ENCODE measurements at regions of chr2 and their contacts with region 1.

Region 1: DNA sequence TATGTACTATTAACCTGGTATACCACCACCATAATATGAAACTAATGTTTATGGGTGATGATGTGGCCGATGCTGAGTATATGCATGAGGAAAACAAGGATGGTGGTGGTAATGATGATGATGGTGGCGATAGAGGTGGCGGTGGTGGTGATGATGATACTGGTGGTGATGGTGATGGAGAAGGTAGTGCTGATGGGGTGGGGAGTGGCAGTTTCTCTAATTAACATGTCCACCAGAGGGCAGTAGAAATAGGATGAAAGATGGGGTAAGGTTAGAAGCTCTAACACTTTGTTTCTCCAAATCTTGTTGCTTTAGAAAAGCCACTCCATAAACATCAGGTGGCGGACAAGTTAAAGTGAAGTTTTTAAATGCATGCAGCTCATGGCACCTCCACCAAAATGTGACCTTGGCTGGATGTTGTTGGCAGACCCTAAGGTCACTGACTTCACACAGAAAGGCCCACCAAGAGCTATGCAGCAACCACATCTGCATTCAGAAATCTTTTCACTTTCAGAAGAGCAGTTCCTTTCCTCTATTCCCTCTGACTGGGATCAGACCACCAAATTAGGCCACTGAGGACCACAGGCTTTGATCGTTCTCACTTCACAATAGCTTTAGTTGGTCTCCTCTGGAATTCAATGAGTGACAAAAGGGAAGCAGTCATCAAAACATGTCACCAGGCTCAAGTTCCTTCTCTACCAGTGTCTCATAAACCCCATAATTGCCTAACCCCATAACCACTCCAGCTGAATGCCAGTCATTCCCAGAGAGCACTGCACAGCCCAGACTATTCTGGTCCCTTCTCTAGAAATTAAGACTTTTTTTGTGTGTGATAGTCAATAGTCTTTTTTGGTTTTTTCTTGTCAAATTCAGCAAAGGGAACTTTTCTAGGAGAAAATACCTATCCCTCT is 7.5 kb upstream of the BCL11A start:
- DNase-seq: no peak
- ATAC-seq: peak; percentile 65
- H3K4me3 ChIP-seq: no peak overlapping the region
- H3K27ac ChIP-seq: no peak overlapping the region
- H3K4me1 ChIP-seq: no peaks in the 10 kb centered on the region
- H3K27me3 ChIP-seq: peaks cover 22% of the 10 kb centered on the region
- CTCF ChIP-seq: peak; percentile 56
- POLR2A ChIP-seq: no peak
- RAD21 ChIP-seq: peak; percentile 41

Region 2: DNA sequence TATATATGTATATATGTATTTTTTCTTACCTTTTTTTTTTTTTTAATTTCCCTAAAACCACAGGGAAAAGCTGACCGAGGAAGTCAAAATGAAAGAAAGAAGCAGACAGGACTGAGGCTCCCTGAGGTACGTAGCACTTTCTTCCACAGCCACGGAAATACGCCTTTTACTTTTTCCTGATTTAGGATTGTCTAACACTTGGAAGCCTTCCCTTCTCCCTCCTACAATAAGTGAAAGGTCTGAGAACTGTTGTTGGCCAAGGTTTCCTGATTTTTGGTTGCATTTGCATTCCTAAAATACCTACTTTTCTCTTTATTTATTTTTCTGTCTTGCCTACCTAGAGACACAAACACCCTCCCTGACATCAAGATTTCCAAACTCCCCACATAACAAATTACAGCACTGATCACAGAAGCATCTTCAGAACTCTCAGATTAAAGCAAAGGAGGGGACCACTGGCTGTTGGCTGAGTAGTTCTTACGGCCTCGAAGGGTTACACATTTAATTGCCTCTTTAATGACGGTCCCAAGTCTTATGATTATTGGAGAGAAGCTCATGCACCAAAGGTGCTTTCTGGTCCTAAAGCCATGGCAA is 1541.3 kb before region 1 on chr2:
- CTCF ChIA-PET with region 1: no interaction called
- POLR2A ChIA-PET with region 1: no interaction called
- dilution Hi-C with region 1: no loop called
- in situ Hi-C with region 1: loop called (anchors 10 kb)
- intact Hi-C with region 1: loop called (anchors 5 kb)
- DNase-seq: no peak
- ATAC-seq: no peak
- H3K4me3 ChIP-seq: no peak overlapping the region
- H3K27ac ChIP-seq: no peak overlapping the region
- H3K4me1 ChIP-seq: no peaks in the 10 kb centered on the region
- H3K27me3 ChIP-seq: no peaks in the 10 kb centered on the region
- CTCF ChIP-seq: no peak
- POLR2A ChIP-seq: no peak
- RAD21 ChIP-seq: no peak

Region 3: DNA sequence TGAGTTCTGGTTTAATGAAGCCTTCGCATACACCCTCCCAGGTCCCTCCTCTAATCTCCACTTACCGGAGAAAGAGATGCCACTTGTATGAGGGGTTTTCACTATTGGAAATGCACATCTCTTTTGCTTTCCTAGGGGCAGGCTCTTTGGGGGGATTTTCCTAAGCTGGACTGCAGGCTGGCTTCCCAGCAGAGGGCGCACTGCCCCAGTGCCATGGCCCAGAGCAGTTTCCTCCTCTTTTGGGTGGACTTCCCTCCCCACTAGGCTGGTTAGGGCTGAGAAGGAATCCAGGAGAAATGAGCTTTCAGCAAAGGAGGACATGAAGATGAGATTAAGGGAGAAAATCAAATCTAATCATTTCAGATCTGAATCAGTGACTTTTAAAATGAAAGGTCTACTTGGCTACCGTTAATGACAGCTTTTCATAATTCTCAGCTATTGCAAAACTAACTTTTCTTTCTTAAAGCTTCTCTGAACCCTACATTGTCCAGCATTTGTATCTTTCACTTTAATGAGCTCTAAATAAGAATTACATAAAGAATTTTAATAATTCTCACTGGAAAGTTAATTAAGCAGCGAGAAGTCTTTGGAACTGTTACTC is 1535.7 kb before region 1 on chr2:
- CTCF ChIA-PET with region 1: no interaction called
- POLR2A ChIA-PET with region 1: no interaction called
- dilution Hi-C with region 1: no loop called
- in situ Hi-C with region 1: loop called (anchors 10 kb)
- intact Hi-C with region 1: loop called (anchors 5 kb)
- DNase-seq: peak; percentile 26
- ATAC-seq: peak; percentile 70
- H3K4me3 ChIP-seq: no peak overlapping the region
- H3K27ac ChIP-seq: no peak overlapping the region
- H3K4me1 ChIP-seq: no peaks in the 10 kb centered on the region
- H3K27me3 ChIP-seq: no peaks in the 10 kb centered on the region
- CTCF ChIP-seq: peak; percentile 59
- POLR2A ChIP-seq: no peak
- RAD21 ChIP-seq: peak; percentile 58

Region 4: GRCh38 chr2:59301466-59302402 is 1259.3 kb before region 1 on chr2:
- CTCF ChIA-PET with region 1: no interaction called
- POLR2A ChIA-PET with region 1: no interaction called
- dilution Hi-C with region 1: no loop called
- in situ Hi-C with region 1: loop called (anchors 10 kb)
- intact Hi-C with region 1: no loop called
- DNase-seq: peak; percentile 70
- ATAC-seq: peak; percentile 48
- H3K4me3 ChIP-seq: no peak overlapping the region
- H3K27ac ChIP-seq: no peak overlapping the region
- H3K4me1 ChIP-seq: no peaks in the 10 kb centered on the region
- H3K27me3 ChIP-seq: no peaks in the 10 kb centered on the region
- CTCF ChIP-seq: peak; percentile 55
- POLR2A ChIP-seq: no peak
- RAD21 ChIP-seq: peak; percentile 53